ENCODE measurements at regions of chr12 and their contacts with region 1.

Region 1: GRCh38 chr12:69059483-69060457 is 126.8 kb upstream of the CPM start:
- DNase-seq: no peak
- ATAC-seq: no peak

Region 2: DNA sequence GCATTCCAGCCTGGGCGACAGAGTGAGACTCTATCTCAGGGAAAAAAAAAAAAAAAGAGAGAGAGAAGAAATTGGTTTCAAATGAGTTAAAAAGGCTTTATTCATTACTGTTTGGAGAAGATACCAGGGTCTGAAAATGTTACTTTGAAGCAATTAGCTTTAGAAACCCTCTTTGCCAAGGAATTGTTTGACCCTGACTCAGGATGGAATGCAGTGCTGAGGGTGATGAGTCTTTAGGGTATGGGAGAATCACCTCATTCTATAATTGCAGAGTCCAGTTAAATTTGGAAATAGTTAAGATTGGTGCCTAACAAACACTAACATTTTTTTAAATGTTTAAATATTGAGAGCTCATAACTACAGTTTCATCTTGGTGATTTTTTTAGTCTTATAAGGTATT is 435.8 kb before region 1 on chr12:
- intact Hi-C with region 1: no loop called
- DNase-seq: no peak
- ATAC-seq: no peak

Region 3: DNA sequence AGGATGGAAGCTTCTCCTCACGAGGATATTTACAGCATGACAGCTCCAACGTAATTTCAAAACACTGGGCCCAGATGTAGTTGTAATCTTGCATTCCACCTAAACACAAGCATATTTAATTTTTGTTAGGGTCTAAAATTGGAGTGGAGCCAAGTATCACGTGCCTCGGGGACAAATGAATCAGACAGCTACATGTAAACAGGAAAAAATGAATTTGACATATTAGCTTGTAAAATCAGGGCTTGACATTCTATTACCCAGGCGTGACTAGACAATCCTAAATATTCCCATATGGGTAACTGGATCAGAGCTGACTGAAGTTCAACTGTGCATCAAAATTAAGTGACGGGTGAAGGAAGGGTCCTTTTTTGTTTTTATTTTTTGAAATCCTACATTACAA is 192.8 kb before region 1 on chr12:
- intact Hi-C with region 1: loop called in 1 of 2 experiments (anchors 10 kb)
- DNase-seq: no peak
- ATAC-seq: no peak

Region 4: DNA sequence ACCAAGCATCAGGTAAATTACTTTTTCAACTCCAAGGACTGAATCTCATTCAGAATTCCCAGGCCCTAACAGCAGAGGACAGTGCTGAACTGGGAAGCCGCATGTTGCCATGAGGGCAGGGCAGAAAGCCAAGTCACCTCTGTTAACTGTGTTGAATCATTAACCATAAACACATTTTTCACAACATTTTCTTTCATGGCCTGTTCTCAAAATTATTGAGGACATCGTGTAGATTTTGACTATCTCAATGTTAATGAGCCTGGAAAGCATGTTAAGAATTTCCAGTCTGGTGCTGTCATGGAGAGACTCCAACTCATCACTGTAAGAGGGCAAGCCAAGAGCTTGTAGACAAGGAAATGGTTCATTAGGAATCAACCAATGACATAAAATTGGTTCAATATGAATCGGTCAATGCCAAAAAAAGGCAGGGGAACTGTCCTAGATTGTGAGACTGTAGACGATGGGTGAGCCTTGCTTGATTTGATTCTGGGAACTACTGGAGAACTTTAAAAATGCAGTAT is 160.5 kb before region 1 on chr12:
- intact Hi-C with region 1: loop called in 1 of 2 experiments (anchors 10 kb)
- DNase-seq: peak; percentile 73 to 79
- ATAC-seq: peak; percentile 94

Region 5: DNA sequence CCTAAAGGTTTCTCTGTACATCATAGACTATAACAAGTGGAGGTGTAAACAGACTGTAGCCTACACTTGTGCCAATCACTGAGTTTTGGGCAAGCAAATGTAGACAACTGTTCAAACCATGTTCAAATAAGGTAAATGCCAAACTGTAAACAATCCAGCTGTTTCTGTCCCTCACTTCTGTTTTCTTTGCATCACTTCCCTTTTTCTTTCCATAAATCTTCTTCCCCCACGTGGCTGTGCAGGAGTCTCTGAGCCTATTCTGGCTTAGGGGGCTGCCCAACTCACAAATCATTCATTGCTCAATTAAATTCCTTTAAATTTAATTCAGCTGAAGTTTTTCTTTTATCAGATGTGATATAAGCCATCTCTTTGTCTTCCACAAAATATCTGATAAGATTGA is 61.7 kb before region 1 on chr12:
- intact Hi-C with region 1: no loop called
- DNase-seq: no peak
- ATAC-seq: no peak